ENCODE measurements at regions of chr6 and their contacts with region 1.

Region 1: DNA sequence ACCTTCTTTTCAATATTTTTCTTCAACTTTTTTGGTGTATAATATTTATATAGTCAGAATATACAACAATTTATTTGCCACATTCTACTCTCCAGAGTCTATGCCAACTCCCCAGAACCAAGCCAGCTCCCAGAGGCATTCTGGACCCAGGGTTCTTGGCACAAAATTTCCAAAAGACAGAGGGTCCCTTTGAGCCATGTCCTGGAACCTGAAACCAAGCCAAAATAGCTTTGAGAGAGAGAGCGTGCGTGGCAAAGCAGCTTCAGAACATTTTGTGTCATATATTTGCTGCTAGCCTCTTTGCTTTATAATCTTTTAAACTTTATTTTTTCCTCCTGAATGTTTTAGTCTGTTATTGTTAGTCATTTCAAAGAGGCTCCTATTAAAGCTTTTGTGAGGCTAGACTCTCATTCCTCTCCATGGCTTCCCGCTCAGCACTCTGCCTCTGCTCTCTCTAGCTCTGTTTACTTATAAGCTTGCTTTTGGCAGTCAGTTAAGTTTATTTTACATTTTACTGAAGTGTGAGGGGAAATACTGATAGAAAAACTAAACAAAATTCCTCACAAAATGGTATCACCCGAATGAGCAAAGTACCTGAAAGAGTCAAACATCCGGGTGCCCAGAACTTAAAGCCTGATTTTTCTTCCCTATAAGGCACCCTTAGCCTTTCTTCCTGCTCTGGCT is 605.1 kb upstream of the ID4 start:
- DNase-seq: no peak
- ATAC-seq: no peak
- H3K4me3 ChIP-seq: no peak overlapping the region
- H3K27ac ChIP-seq: no peak overlapping the region
- H3K4me1 ChIP-seq: no peaks in the 10 kb centered on the region
- H3K27me3 ChIP-seq: no peaks in the 10 kb centered on the region
- CTCF ChIP-seq: no peak
- EP300 ChIP-seq: no peak
- POLR2A ChIP-seq: no peak
- RAD21 ChIP-seq: no peak

Region 2: DNA sequence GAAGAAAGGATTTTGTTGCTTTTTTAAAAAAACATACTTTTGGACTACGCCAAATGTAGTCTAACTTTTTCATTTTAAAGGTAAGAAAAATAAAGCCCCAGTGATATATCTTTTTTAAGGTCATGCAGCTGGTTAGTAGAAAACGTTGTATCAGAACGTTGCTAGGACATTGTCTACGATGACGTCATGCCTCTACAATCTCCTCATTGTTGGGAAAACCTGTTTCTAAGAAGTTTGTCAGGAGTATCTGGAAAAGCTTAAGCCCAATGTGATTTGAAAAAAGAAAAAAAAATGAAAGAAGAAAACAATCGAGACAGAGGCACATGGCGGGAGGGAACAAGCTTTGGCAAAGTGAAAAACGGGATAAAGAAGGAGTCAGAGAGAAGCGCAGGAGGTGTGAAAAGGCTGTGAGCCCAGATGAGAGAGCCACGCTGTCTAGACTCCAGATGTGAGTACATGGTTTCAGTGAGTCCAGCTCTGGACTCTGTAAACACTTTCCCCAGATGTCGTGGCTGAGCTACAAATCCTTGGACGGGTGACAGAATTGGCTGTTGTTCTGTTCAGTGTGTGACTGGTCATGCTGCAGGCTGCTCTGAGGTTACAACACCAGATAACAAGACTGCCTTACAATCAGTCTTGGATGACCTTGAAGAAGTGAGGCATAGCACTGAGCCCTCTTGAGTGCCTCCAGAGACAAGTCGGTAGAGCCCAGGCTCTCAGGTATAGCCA is 51.5 kb before region 1 on chr6:
- CTCF ChIA-PET with region 1: no interaction called
- POLR2A ChIA-PET with region 1: no interaction called
- RAD21 ChIA-PET with region 1: no interaction called
- SMC1A ChIA-PET with region 1: no interaction called
- in situ Hi-C with region 1: no loop called
- intact Hi-C with region 1: loop called (anchors 2 kb)
- DNase-seq: no peak
- ATAC-seq: no peak
- H3K4me3 ChIP-seq: no peak overlapping the region
- H3K27ac ChIP-seq: no peak overlapping the region
- H3K4me1 ChIP-seq: no peaks in the 10 kb centered on the region
- H3K27me3 ChIP-seq: no peaks in the 10 kb centered on the region
- CTCF ChIP-seq: no peak
- EP300 ChIP-seq: no peak
- POLR2A ChIP-seq: no peak
- RAD21 ChIP-seq: no peak

Region 3: DNA sequence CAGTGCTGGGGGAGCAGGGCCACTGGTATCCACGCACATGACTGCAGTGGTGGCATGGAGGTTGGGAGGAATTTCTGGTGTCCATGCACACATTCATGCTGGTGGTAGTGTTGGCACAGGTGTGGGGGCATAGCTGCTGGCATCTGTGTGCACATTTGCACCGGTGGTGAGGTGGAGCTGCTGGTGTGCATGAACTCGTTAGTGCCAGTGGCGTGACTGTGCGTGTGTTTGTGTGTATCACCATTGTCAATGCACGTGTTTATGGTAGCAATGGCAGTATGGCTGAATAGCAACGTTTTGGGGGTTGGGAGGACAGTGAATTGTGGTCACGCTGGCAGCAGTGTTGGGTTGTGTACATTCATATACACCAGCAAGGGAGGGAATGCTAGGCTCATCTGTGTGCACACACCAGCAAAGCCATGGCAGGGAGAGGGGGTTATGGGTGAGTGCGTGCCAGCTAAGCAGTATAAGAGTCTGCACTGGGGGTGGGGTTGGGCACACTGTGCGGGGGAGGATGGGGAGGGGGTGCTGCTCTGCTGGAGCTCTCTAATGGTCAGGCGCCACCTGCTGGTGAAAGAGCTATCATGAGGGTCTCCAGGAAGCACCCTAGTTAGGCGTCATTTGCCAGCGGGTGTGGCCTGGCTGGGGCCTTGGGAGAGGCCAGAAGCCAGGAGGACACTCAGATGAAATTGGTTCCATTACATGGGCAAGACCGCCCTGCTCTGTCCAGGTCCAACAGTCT is 21.0 kb before region 1 on chr6:
- CTCF ChIA-PET with region 1: no interaction called
- POLR2A ChIA-PET with region 1: no interaction called
- RAD21 ChIA-PET with region 1: no interaction called
- SMC1A ChIA-PET with region 1: no interaction called
- in situ Hi-C with region 1: no loop called
- intact Hi-C with region 1: no loop called
- DNase-seq: no peak
- ATAC-seq: peak; percentile 56
- H3K4me3 ChIP-seq: no peak overlapping the region
- H3K27ac ChIP-seq: no peak overlapping the region
- H3K4me1 ChIP-seq: no peaks in the 10 kb centered on the region
- H3K27me3 ChIP-seq: no peaks in the 10 kb centered on the region
- CTCF ChIP-seq: peak in 2 of 3 experiments; percentile 14 to 32; a peak in 3 of 6 replicates
- EP300 ChIP-seq: no peak
- POLR2A ChIP-seq: no peak
- RAD21 ChIP-seq: no peak

Measured in GM12878 (cell line).